Naive thymus-derived CD4-positive, alpha-beta T cell (primary cell): ENCODE measurements at regions of chr7 and their contacts with region 1.

Region 1: DNA sequence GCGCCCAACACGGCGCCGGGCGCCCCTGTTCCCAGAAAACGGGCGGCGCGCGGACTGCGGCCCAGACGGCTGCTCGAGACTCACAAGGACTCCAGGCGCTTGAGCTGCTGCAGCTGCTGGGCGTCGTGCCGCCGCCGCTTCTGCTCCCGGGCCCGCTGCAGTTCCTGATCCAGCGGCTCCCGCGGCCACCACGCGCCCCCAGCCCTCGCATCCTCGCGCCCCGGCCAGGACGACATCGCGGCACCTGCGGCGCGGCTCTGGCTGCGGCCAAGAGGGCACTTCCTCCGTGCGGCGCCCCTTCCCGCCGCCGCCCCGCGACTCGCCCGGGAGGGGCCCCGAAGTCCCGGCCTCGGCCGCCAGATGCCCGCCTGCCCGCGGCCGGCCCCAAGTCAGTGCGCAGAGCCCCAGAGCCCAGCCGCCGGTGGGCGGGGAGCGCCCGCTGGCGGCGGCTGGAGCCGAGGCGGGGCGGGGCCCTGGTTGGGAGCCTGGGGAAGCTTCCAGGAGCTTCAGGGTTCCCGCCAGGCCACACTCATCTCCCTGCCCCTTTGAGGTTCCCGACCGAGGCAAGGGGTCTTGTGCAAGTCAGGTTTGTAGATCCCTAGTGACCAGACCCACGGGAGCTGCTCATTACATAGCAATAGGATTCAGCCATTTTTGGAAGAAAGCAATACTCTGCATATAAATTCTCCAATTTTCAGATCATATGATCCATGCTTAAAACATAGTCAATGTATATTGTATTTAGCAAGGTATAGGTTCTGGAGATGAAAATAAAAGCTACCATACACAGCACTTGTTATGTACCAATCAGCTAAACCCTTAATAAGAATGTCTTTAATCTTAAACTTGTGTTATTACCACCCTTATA is 14.2 kb upstream of the FKBP9 start:
- DNase-seq: peak; percentile 41 to 80 (median 60)
- ATAC-seq: peak; percentile 94
- H3K4me3 ChIP-seq: peak overlapping the region; percentile 66
- H3K4me3 Mint-ChIP-seq: peak overlapping the region; percentile 61 to 97 (median 87)
- H3K27ac ChIP-seq: peak overlapping the region; percentile 47
- H3K27ac Mint-ChIP-seq: peak overlapping the region in 1 of 9 donors; percentile 58
- H3K4me1 ChIP-seq: peaks cover 0 to 13% of the 10 kb centered on the region in 2 donors
- H3K4me1 Mint-ChIP-seq: peaks cover 7 to 27% (median 11%) of the 10 kb centered on the region in 7 donors
- H3K27me3 ChIP-seq: no peaks in the 10 kb centered on the region
- H3K27me3 Mint-ChIP-seq: peaks cover 0 to 10% (median 0%) of the 10 kb centered on the region in 5 donors

Region 2: DNA sequence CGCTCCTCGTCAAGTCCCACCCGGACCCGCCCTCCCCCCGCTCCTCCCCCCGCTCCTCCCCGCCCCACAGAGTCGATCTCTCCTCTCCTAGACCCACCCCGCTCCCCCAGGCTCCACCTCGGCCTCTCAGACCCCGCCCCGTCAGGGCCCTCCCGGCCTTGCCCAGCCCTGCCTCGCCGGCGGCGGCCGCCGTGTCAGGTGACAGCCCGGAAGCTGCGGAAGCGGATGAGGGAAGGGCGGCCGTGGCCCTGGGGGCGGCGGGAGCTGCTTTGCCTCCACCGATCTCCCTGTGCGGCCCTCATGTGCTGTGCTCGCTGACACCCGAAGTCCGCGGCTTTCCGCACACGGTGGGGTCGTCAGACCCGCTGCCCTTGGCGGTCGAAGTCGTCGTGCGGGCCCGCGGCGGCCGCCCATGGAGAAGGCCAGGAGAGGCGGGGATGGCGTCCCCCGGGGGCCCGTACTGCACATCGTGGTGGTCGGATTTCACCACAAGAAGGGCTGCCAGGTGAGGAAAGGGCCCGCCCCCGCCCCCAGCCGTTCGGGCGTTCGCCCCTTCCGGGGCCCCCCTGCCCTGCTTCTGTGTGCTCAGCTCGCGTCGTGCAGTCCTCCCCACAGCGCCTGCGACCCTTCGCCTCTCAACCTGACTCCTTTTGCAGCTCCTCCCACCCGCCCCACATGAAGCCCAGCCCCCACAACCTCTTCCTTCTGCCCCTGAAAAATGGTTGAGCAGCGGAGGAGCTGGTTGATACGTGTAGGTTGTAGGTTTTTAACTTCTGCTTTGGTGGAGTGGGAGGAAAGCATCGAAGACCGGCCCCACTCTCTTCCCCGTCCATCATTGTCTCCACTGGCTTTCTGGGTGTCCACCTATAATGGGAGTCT is 447.5 kb before region 1 on chr7 and contains the start of gene AVL9:
- CTCF ChIA-PET with region 1: no interaction called
- POLR2A ChIA-PET with region 1: no interaction called
- intact Hi-C with region 1: loop called (anchors 1 to 2 kb)
- DNase-seq: peak; percentile 96 to 99 (median 98)
- ATAC-seq: peak; percentile 98
- H3K4me3 ChIP-seq: peak within 1 kb of the TSS; percentile 88
- H3K4me3 Mint-ChIP-seq: peak within 1 kb of the TSS; percentile 86 to 100 (median 96)
- H3K27ac ChIP-seq: peak within 1 kb of the TSS; percentile 96
- H3K27ac Mint-ChIP-seq: peak within 1 kb of the TSS; percentile 92 to 98 (median 97)
- H3K4me1 ChIP-seq: peaks cover 12 to 25% of the 10 kb centered on the region in 2 donors
- H3K4me1 Mint-ChIP-seq: peaks cover 22 to 50% (median 40%) of the 10 kb centered on the region in 7 donors
- H3K27me3 ChIP-seq: no peaks in the 10 kb centered on the region
- H3K27me3 Mint-ChIP-seq: no peaks in the 10 kb centered on the region
- total RNA-seq, gene AVL9: 30.9 to 57.9 (median 45.3) TPM

Region 3: GRCh38 chr7:32761451-32762205 is 181.4 kb before region 1 on chr7:
- CTCF ChIA-PET with region 1: interaction called, 5 read pairs
- POLR2A ChIA-PET with region 1: no interaction called
- intact Hi-C with region 1: loop called in 1 of 2 experiments (anchors 1 kb)
- DNase-seq: no peak
- ATAC-seq: no peak
- H3K4me3 ChIP-seq: no peak overlapping the region
- H3K4me3 Mint-ChIP-seq: peak overlapping the region in 4 of 10 donors; percentile 25 to 75 (median 45)
- H3K27ac ChIP-seq: no peak overlapping the region
- H3K27ac Mint-ChIP-seq: no peak overlapping the region
- H3K4me1 ChIP-seq: no peaks in the 10 kb centered on the region
- H3K4me1 Mint-ChIP-seq: peaks cover 3 to 19% (median 12%) of the 10 kb centered on the region in 7 donors
- H3K27me3 ChIP-seq: peaks cover 0 to 7% of the 10 kb centered on the region in 2 donors
- H3K27me3 Mint-ChIP-seq: peaks cover 32 to 68% (median 52%) of the 10 kb centered on the region in 5 donors

Region 4: GRCh38 chr7:32846701-32847100 is 96.3 kb before region 1 on chr7:
- CTCF ChIA-PET with region 1: interaction called, 134 read pairs
- POLR2A ChIA-PET with region 1: interaction called, 17 read pairs
- intact Hi-C with region 1: loop called (anchors 1 kb)
- DNase-seq: peak; percentile 77 to 89 (median 86)
- ATAC-seq: peak; percentile 100
- H3K4me3 ChIP-seq: no peak overlapping the region
- H3K4me3 Mint-ChIP-seq: peak overlapping the region in 6 of 10 donors; percentile 15 to 42 (median 30)
- H3K27ac ChIP-seq: no peak overlapping the region
- H3K27ac Mint-ChIP-seq: peak overlapping the region in 1 of 9 donors; percentile 33
- H3K4me1 ChIP-seq: peaks cover 7% of the 10 kb centered on the region in 2 donors
- H3K4me1 Mint-ChIP-seq: peaks cover 6 to 10% (median 9%) of the 10 kb centered on the region in 7 donors
- H3K27me3 ChIP-seq: peaks cover 0 to under 1% of the 10 kb centered on the region in 2 donors
- H3K27me3 Mint-ChIP-seq: peaks cover 12 to 44% (median 23%) of the 10 kb centered on the region in 5 donors

Region 5: GRCh38 chr7:33050535-33051318 is 107.7 kb after region 1 on chr7:
- CTCF ChIA-PET with region 1: interaction called, 3 read pairs
- POLR2A ChIA-PET with region 1: no interaction called
- intact Hi-C with region 1: loop called (anchors 1 to 2 kb)
- DNase-seq: peak in 7 of 9 donors; percentile 31 to 65 (median 56)
- ATAC-seq: peak; percentile 81
- H3K4me3 ChIP-seq: no peak overlapping the region
- H3K4me3 Mint-ChIP-seq: peak overlapping the region in 3 of 10 donors; percentile 7 to 53 (median 23)
- H3K27ac ChIP-seq: no peak overlapping the region
- H3K27ac Mint-ChIP-seq: peak overlapping the region in 8 of 9 donors; percentile 2 to 79 (median 32)
- H3K4me1 ChIP-seq: peaks cover 13 to 18% of the 10 kb centered on the region in 2 donors
- H3K4me1 Mint-ChIP-seq: peaks cover 27 to 83% (median 69%) of the 10 kb centered on the region in 7 donors
- H3K27me3 ChIP-seq: no peaks in the 10 kb centered on the region
- H3K27me3 Mint-ChIP-seq: no peaks in the 10 kb centered on the region

Region 6: GRCh38 chr7:34430458-34430857 is 1487.4 kb after region 1 on chr7:
- CTCF ChIA-PET with region 1: no interaction called
- POLR2A ChIA-PET with region 1: no interaction called
- intact Hi-C with region 1: no loop called
- DNase-seq: no peak
- ATAC-seq: no peak
- H3K4me3 ChIP-seq: no peak overlapping the region
- H3K4me3 Mint-ChIP-seq: no peak overlapping the region
- H3K27ac ChIP-seq: no peak overlapping the region
- H3K27ac Mint-ChIP-seq: no peak overlapping the region
- H3K4me1 ChIP-seq: no peaks in the 10 kb centered on the region
- H3K4me1 Mint-ChIP-seq: no peaks in the 10 kb centered on the region
- H3K27me3 ChIP-seq: no peaks in the 10 kb centered on the region
- H3K27me3 Mint-ChIP-seq: no peaks in the 10 kb centered on the region